Left ventricle myocardium inferior (tissue), 1 donor: ENCODE measurements at regions of chr7 and their contacts with region 1.

Region 1: GRCh38 chr7:158976849-158977593 is 120.7 kb downstream of the DYNC2I1 start:
- DNase-seq: peak; percentile 82
- H3K4me3 ChIP-seq: peak overlapping the region; percentile 54
- H3K27ac ChIP-seq: peak overlapping the region; percentile 50
- H3K4me1 ChIP-seq: peaks cover 15% of the 10 kb centered on the region
- H3K27me3 ChIP-seq: no peaks in the 10 kb centered on the region
- CTCF ChIP-seq: peak; percentile 95

Region 2: GRCh38 chr7:158695726-158696452 is 281.1 kb before region 1 on chr7:
- intact Hi-C with region 1: loop called (anchors 5 kb)
- DNase-seq: peak; percentile 38
- H3K4me3 ChIP-seq: peak overlapping the region; percentile 15
- H3K27ac ChIP-seq: peak overlapping the region; percentile 65
- H3K4me1 ChIP-seq: peaks cover 12% of the 10 kb centered on the region
- H3K27me3 ChIP-seq: no peaks in the 10 kb centered on the region
- CTCF ChIP-seq: peak; percentile 79